Thyroid gland (tissue), 4 donors: ENCODE measurements at regions of chr20 and their contacts with region 1.

Region 1: DNA sequence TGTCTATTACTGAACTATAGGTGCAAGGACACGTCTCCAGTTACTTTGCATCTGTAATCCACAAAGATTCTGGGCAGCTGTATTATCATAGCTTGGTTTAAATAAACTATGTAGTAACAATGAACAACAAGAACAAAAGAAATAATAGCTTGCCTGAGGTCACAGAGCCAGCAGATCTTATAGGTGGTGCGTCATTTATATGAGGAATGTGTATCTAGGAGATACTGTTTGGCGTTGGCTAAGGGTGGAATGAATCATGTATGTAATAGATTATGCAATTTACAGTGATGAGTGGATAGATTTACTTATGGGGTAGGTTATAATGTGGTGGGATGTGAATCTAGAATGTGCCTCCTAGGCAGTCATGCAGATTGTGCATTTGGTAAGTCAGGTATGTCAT is 42.8 kb downstream of the HNF4A start:
- DNase-seq: no peak
- H3K4me3 ChIP-seq: no peak overlapping the region
- H3K27ac ChIP-seq: no peak overlapping the region
- H3K4me1 ChIP-seq: no peaks in the 10 kb centered on the region
- H3K27me3 ChIP-seq: no peaks in the 10 kb centered on the region
- CTCF ChIP-seq: no peak
- POLR2A ChIP-seq: no peak

Region 2: DNA sequence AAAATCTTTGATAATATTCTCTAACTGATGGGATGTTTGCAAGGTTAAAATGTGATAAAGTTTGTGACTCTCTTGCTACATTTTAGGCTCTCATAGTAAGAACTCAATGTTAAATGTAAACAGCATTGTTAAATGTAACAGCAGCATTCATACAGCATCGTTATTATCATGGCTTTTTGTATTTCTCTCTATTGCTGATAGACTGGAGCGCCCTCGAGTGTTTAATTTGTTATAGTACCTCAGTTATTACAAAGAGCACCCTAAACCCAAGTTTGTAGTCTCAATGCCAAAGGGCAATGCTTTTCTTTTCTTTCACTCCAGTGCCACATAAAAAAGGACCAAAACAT is 62.5 kb after region 1 on chr20:
- intact Hi-C with region 1: loop called (anchors 10 kb)
- DNase-seq: no peak
- H3K4me3 ChIP-seq: no peak overlapping the region
- H3K27ac ChIP-seq: no peak overlapping the region
- H3K4me1 ChIP-seq: peaks cover 0 to 13% of the 10 kb centered on the region in 2 donors
- H3K27me3 ChIP-seq: no peaks in the 10 kb centered on the region
- CTCF ChIP-seq: peak in 1 of 6 experiments; percentile 17
- POLR2A ChIP-seq: no peak

Region 3: DNA sequence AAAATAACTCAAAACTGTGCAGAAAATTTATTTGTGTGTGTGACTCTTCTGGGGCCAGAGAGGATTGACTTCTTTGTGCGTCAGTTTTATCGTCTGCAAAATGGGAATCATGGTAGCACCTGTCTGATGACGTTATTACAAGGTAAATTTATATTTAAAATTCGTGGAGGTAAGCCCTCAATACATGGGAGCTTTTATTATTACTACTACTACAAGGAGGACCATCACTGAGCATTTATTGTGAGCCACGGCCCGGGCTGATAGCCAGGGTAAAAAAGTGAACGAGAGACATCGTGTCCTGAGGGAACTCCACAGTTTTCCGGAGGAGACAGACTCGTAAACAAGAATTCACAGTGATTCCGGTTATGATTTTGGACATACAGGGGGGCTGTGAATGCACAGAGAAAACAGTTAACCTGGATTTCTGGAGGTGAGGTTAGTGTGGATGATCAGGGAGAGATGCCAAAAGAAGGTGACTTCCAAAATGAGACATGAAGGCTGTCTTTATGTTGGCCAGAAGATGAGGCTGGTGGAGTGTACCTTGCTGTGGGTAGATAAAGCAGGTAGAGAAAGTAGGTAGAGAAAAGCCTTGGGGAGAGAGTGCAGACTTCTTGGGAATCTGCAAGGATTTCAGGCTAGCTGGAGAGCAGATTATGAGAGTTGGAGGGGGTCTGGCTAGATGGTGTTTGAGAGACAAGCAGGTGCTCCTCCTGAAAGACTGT is 134.1 kb after region 1 on chr20:
- intact Hi-C with region 1: no loop called
- DNase-seq: peak; percentile 25 to 36
- H3K4me3 ChIP-seq: peak overlapping the region; percentile 18 to 91 (median 90)
- H3K27ac ChIP-seq: peak overlapping the region; percentile 6 to 93 (median 78)
- H3K4me1 ChIP-seq: peaks cover 8 to 23% of the 10 kb centered on the region in 2 donors
- H3K27me3 ChIP-seq: no peaks in the 10 kb centered on the region
- CTCF ChIP-seq: no peak
- POLR2A ChIP-seq: peak in 1 of 2 donors; percentile 8